ENCODE measurements at regions of chr6 and their contacts with region 1.

Region 1: GRCh38 chr6:53484476-53485280 is 60.2 kb downstream of the GCLC start:
- DNase-seq: no peak
- ATAC-seq: peak; percentile 87

Region 2: DNA sequence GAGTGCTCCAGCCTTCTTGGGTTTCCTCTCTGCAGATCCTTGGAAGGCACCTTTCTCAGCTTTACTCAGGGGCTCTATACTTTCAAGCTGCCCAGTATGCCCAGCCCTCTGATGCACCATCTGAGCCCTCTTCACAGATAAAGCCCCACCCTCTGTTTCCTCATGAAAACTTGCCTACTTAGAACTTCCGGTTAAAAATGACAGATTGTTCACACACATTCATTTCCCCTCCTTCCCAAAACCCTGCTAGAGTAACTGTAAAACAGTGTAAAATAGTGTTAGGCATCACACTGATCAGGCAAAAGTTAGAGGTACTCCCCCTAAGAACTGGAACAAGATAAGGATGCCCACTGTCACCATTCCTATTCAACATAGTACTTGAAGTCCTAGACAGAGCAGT is 322.1 kb before region 1 on chr6:
- intact Hi-C with region 1: loop called (anchors 5 kb)
- DNase-seq: no peak
- ATAC-seq: no peak

Measured in left ventricle myocardium superior (tissue), 1 donor.